Activated naive CD4-positive, alpha-beta T cell treated with anti-CD3 and anti-CD28 coated beads, Interleukin-2, amount 10 ng/mL, durations not matched to agents 7 days and 5 days (primary cell): ENCODE measurements at regions of chr3 and their contacts with region 1.

Region 1: DNA sequence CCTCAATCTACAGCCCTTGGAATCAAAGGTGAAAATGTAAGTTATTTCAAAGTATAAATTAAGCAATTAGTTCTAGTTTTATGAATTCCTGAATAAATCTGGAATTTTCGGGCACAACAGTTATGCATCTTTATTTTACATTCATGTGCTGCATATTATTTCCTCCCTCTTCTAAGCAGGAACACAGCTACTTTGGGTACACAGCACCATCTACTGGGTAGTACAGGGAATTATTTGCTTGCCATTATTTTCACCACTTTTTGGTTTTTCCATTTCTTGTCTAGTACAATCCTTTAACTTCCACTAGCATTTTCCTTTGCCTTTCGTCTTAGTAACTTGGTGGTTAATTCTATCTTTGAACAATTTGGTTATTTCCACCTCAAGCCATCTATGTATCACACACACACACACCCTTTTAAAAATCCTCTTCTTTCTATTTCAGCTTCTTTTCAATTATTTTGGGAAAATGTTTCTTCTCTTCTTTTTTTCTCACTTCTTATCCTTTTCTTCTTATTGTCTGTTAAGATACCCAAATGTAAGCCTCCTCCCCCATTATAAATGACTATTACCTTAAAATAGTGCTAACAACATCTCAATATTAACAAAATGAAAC is 451.0 kb downstream of the MFSD1 start:
- DNase-seq: no peak
- H3K4me3 Mint-ChIP-seq: no peak overlapping the region
- H3K27ac Mint-ChIP-seq: no peak overlapping the region
- H3K4me1 Mint-ChIP-seq: no peaks in the 10 kb centered on the region
- H3K27me3 Mint-ChIP-seq: peaks cover 4% of the 10 kb centered on the region

Region 2: GRCh38 chr3:158790901-158791589 is 461.8 kb before region 1 on chr3:
- CTCF ChIA-PET with region 1: interaction called, 13 read pairs
- DNase-seq: peak; percentile 47
- H3K4me3 Mint-ChIP-seq: no peak overlapping the region
- H3K27ac Mint-ChIP-seq: no peak overlapping the region
- H3K4me1 Mint-ChIP-seq: peaks cover 4% of the 10 kb centered on the region
- H3K27me3 Mint-ChIP-seq: peaks cover 11% of the 10 kb centered on the region

Region 3: GRCh38 chr3:158845765-158846350 is 407.0 kb before region 1 on chr3:
- CTCF ChIA-PET with region 1: interaction called, 26 read pairs
- DNase-seq: peak; percentile 37
- H3K4me3 Mint-ChIP-seq: no peak overlapping the region
- H3K27ac Mint-ChIP-seq: no peak overlapping the region
- H3K4me1 Mint-ChIP-seq: peaks cover 20% of the 10 kb centered on the region
- H3K27me3 Mint-ChIP-seq: peaks cover 4% of the 10 kb centered on the region

Region 4: GRCh38 chr3:159025733-159026132 is 227.1 kb before region 1 on chr3:
- CTCF ChIA-PET with region 1: no interaction called
- DNase-seq: no peak
- H3K4me3 Mint-ChIP-seq: no peak overlapping the region
- H3K27ac Mint-ChIP-seq: no peak overlapping the region
- H3K4me1 Mint-ChIP-seq: no peaks in the 10 kb centered on the region
- H3K27me3 Mint-ChIP-seq: no peaks in the 10 kb centered on the region